Activated naive CD8-positive, alpha-beta T cell treated with anti-CD3 and anti-CD28 coated beads, Interleukin-2, amount 10 ng/mL, durations not matched to agents 7 days and 5 days (primary cell): ENCODE measurements at regions of chr7 and their contacts with region 1.

Region 1: GRCh38 chr7:92528188-92528957 is at the starts of genes PEX1 and RBM48:
- DNase-seq: peak; percentile 89
- ATAC-seq: peak; percentile 94
- H3K4me3 Mint-ChIP-seq: peak within 1 kb of the TSS; percentile 90
- H3K27ac Mint-ChIP-seq: peak within 1 kb of the TSS; percentile 96
- H3K4me1 Mint-ChIP-seq: peaks cover 21% of the 10 kb centered on the region
- H3K27me3 Mint-ChIP-seq: no peaks in the 10 kb centered on the region
- total RNA-seq, gene PEX1: 23.5 to 24.4 TPM
- total RNA-seq, gene RBM48: 22.6 to 24.2 TPM

Region 2: DNA sequence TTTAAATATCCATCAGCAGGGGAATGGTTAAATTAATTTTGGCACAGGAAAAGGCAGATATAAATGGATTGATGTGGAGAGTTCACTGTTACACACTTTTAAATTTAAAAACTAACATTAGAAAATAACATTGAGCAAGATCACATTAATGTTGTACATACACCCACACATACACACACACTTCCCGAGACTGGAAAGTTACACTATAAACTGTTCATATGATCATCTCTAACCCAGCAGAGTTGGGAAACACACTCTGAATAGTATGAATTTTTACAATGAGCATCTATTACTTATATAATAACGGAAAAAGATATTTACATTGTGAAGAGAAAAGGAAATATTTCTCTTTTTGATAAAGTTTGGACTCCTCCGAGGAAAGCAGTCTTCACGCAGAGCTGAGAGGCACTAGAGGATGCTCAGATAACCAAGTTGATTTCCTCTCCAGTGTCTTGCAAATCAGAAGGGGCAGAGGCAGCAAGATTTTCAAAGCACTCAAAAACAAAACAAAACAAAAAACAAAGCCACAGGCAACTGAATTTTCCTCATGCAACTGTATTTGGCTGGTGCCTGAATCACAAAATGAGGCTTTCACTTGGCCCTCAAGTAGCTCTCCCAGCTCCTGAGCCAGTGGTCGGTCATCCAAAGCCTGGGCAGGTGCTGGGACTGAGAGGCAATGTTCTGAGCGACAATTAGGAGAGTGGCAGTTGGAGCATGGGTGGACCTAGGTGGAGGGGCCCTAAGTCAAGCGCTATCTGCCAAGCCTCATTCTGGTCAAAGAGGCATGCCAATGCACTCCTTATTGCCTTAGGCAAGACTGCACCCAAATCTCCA is 91.5 kb before region 1 on chr7:
- POLR2A ChIA-PET with region 1: no interaction called
- DNase-seq: no peak
- ATAC-seq: no peak
- H3K4me3 Mint-ChIP-seq: no peak overlapping the region
- H3K27ac Mint-ChIP-seq: no peak overlapping the region
- H3K4me1 Mint-ChIP-seq: no peaks in the 10 kb centered on the region
- H3K27me3 Mint-ChIP-seq: no peaks in the 10 kb centered on the region

Region 3: DNA sequence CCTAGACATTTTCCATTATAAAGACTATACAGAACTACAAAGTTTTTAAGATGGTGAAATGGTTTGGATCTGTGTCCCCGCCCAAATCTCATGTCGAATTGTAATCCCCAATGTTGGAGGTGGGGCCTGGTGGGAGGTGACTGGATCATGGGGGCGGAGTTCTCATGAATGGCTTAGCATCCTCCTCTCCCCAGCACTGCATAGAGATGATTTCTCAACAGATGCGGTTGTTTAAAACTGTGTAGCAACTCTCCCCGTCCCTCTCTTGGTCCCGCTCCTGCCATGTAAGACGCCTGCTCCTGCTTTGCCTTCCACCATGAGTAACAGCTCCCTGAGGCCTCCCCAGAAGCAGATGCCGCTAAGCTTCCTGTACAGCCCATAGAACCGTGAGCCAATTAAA is 60.2 kb after region 1 on chr7:
- POLR2A ChIA-PET with region 1: interaction called, 13 read pairs
- DNase-seq: no peak
- ATAC-seq: no peak
- H3K4me3 Mint-ChIP-seq: peak overlapping the region; percentile 91
- H3K27ac Mint-ChIP-seq: peak overlapping the region; percentile 18
- H3K4me1 Mint-ChIP-seq: peaks cover 36% of the 10 kb centered on the region
- H3K27me3 Mint-ChIP-seq: peaks cover 13% of the 10 kb centered on the region